ENCODE measurements at regions of chr5 and their contacts with region 1.

Region 1: DNA sequence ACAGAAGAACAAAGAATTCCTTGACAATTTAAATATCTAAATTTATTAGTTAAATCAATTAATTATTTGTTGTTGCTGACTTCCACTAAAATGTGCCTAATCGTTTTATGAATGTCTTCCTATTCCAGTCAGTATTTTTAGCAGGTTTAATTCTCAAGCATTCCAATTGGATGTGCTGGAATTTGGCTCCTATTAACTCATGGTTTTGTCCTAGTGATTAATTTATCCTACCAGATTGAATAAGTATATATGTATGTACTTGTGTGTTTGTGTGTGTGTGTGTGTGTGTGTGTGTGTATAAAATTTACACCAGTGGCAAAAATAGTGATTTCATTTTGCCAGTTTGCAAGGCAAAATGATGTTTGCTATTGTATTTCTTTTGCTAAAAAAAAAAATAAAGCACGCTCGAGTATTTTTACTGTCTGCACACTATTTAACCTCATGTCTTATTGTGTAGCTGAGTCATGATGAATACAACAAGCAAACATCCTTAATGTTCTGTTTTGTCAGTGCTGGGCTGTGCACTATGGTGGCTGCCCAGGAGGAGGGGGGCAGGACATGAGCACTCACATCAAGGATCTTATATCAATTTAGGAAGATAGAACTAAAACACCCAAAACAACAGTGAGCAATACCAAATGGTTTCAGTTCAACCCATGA is 375.5 kb downstream of the PDE4D start:
- DNase-seq: no peak
- CTCF ChIP-seq: no peak

Region 2: DNA sequence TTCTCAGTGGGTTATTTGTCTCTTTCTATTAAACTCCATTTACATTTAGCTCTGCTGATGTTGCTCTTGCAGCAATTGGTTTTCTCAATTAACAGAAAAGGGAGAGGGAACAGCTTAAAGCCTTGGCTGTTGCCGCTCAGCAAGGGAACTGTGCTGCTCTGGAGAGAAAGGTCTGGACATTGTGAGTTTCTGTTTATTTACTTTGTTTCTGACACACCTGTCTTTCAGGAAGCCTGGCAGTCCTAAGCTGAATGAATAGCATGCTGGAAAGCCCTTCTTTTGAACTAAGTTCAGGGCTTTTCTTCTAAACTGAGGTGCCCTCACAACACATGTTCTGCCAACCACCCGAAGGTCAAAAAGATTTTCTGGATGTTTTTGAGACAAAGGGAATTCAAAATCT is 116.4 kb before region 1 on chr5:
- in situ Hi-C with region 1: no loop called
- DNase-seq: no peak
- CTCF ChIP-seq: no peak

Region 3: DNA sequence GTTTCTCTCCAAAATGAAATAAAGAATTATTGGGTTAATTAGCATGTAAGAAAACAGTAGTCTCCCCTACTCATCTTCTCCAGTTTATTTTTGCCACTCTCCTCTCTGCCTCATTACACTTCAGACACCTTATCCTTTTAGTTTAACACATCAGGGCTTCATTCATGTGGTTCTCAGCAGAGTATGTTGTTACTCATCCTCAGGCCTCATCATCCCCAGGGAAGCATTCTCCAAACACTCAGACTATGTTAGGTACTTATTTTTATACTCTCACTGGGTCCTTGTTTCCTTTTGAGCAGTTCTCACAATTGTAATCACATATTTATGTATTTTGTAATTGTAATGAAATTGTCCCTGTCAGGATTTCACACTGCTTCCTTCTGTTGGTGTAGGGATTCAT is 95.0 kb before region 1 on chr5:
- in situ Hi-C with region 1: no loop called
- DNase-seq: no peak
- CTCF ChIP-seq: no peak

Region 4: GRCh38 chr5:59660737-59661136 is 142.7 kb after region 1 on chr5:
- in situ Hi-C with region 1: loop called (anchors 10 kb)
- DNase-seq: peak; percentile 28
- CTCF ChIP-seq: no peak